Pancreas (tissue), 10 donors: ENCODE measurements at regions of chr2 and their contacts with region 1.

Region 1: GRCh38 chr2:85813982-85814801 is 60.4 kb downstream of the ATOH8 start:
- DNase-seq: peak; percentile 85 to 99 (median 95)
- ATAC-seq: peak; percentile 95 to 99 (median 98)
- H3K4me3 ChIP-seq: no peak overlapping the region
- H3K27ac ChIP-seq: peak overlapping the region in 1 of 4 donors; percentile 19
- H3K4me1 ChIP-seq: no peaks in the 10 kb centered on the region
- H3K27me3 ChIP-seq: no peaks in the 10 kb centered on the region
- CTCF ChIP-seq: peak; percentile 88 to 92 (median 90)

Region 2: GRCh38 chr2:85628658-85629057 is 185.5 kb before region 1 on chr2:
- intact Hi-C with region 1: no loop called
- DNase-seq: no peak
- ATAC-seq: no peak
- H3K4me3 ChIP-seq: no peak overlapping the region
- H3K27ac ChIP-seq: no peak overlapping the region
- H3K4me1 ChIP-seq: no peaks in the 10 kb centered on the region
- H3K27me3 ChIP-seq: no peaks in the 10 kb centered on the region
- CTCF ChIP-seq: no peak

Region 3: GRCh38 chr2:85728883-85729824 is 85.0 kb before region 1 on chr2:
- intact Hi-C with region 1: loop called in 2 of 3 experiments (anchors 2 to 5 kb)
- DNase-seq: peak; percentile 71 to 97 (median 90)
- ATAC-seq: peak; percentile 95 to 100 (median 98)
- H3K4me3 ChIP-seq: no peak overlapping the region
- H3K27ac ChIP-seq: no peak overlapping the region
- H3K4me1 ChIP-seq: no peaks in the 10 kb centered on the region
- H3K27me3 ChIP-seq: no peaks in the 10 kb centered on the region
- CTCF ChIP-seq: peak; percentile 82 to 92 (median 87)

Region 4: DNA sequence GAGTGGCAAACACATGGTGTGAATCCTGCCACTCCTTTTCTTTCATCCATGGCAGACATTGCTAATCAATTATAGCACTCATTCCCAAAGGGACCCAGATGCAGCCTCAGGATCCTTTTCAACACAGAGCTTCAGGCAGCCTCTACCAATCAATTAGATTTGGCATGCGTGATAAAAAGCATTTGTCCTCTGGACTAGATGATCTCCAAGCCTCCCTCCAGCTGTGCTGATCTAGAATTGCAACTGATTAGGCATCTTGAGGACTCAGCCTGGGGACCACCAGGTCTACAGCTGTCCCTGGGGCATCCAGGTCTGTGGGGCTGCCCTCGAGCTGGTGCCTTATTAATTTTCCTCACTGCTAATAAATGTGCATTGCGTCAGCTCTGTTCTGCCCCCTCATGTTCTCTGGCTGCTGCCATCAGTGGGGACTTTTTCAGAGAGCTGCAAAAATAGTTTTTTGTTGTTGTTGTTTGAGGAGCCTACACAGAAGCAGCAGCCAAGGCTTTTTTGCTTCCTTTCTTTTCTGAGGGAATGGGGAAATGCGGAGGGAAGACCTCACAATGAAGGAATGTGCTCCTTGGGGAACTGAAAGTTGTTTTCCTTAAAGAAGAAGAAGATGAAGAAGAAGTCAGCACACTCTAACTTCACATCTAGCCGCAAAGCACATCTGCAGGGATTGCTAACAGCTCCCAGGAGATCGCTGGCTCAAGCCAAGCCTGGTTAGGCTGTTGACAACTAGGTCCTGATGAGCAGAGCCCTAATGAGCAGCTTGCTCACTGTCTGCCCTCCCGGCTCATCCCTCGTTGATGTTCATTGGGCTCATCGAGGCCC is 69.2 kb before region 1 on chr2:
- intact Hi-C with region 1: loop called (anchors 5 to 10 kb)
- DNase-seq: no peak
- ATAC-seq: no peak
- H3K4me3 ChIP-seq: no peak overlapping the region
- H3K27ac ChIP-seq: peak overlapping the region in 1 of 4 donors; percentile 23
- H3K4me1 ChIP-seq: peaks cover 19 to 36% (median 20%) of the 10 kb centered on the region in 3 donors
- H3K27me3 ChIP-seq: no peaks in the 10 kb centered on the region
- CTCF ChIP-seq: no peak

Region 5: GRCh38 chr2:85750587-85751575 is 63.3 kb before region 1 on chr2:
- intact Hi-C with region 1: loop called (anchors 5 to 10 kb)
- DNase-seq: peak in 5 of 6 donors; percentile 60 to 83 (median 73)
- ATAC-seq: peak; percentile 66 to 85 (median 80)
- H3K4me3 ChIP-seq: no peak overlapping the region
- H3K27ac ChIP-seq: no peak overlapping the region
- H3K4me1 ChIP-seq: peaks cover 0 to 17% (median 12%) of the 10 kb centered on the region in 3 donors
- H3K27me3 ChIP-seq: no peaks in the 10 kb centered on the region
- CTCF ChIP-seq: peak; percentile 58 to 74 (median 70)

Region 6: GRCh38 chr2:86174445-86174844 is 360.3 kb after region 1 on chr2:
- intact Hi-C with region 1: no loop called
- DNase-seq: no peak
- ATAC-seq: no peak
- H3K4me3 ChIP-seq: no peak overlapping the region
- H3K27ac ChIP-seq: no peak overlapping the region
- H3K4me1 ChIP-seq: peaks cover 3 to 14% (median 6%) of the 10 kb centered on the region in 3 donors
- H3K27me3 ChIP-seq: no peaks in the 10 kb centered on the region
- CTCF ChIP-seq: no peak